ENCODE measurements at regions of chr4 and their contacts with region 1.

Region 1: GRCh38 chr4:4677556-4678522 is 136.0 kb upstream of the STX18 start:
- DNase-seq: no peak
- ATAC-seq: peak in 1 of 4 donors; percentile 39
- H3K4me3 ChIP-seq: peak overlapping the region in 3 of 12 donors; percentile 4 to 24 (median 16)
- H3K27ac ChIP-seq: no peak overlapping the region
- H3K4me1 ChIP-seq: peaks cover 0 to 11% (median 0%) of the 10 kb centered on the region in 12 donors
- H3K27me3 ChIP-seq: no peaks in the 10 kb centered on the region
- CTCF ChIP-seq: peak; percentile 30 to 57 (median 48)
- POLR2A ChIP-seq: no peak

Region 2: DNA sequence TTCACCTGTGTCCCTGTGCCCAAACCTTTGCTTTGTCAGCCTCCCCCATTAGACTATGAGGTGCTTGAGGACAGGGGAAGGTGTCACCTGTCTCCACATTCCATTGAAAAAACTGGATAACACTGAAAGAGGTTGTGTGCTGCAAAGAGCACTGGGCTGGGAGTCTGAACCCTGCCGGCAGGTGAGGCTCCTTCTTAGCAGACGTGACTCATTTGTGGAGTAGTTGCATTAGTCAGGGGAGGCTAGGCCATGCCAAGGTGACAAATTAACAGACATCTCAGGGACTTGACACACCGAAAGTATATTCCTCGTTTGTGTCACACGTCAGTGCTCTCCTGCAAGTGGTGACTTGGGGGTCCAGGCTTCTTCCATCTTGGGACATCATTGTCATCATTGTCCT is 40.1 kb before region 1 on chr4:
- intact Hi-C with region 1: no loop called
- DNase-seq: no peak
- ATAC-seq: no peak
- H3K4me3 ChIP-seq: no peak overlapping the region
- H3K27ac ChIP-seq: no peak overlapping the region
- H3K4me1 ChIP-seq: no peaks in the 10 kb centered on the region
- H3K27me3 ChIP-seq: no peaks in the 10 kb centered on the region
- CTCF ChIP-seq: no peak
- POLR2A ChIP-seq: no peak

Region 3: DNA sequence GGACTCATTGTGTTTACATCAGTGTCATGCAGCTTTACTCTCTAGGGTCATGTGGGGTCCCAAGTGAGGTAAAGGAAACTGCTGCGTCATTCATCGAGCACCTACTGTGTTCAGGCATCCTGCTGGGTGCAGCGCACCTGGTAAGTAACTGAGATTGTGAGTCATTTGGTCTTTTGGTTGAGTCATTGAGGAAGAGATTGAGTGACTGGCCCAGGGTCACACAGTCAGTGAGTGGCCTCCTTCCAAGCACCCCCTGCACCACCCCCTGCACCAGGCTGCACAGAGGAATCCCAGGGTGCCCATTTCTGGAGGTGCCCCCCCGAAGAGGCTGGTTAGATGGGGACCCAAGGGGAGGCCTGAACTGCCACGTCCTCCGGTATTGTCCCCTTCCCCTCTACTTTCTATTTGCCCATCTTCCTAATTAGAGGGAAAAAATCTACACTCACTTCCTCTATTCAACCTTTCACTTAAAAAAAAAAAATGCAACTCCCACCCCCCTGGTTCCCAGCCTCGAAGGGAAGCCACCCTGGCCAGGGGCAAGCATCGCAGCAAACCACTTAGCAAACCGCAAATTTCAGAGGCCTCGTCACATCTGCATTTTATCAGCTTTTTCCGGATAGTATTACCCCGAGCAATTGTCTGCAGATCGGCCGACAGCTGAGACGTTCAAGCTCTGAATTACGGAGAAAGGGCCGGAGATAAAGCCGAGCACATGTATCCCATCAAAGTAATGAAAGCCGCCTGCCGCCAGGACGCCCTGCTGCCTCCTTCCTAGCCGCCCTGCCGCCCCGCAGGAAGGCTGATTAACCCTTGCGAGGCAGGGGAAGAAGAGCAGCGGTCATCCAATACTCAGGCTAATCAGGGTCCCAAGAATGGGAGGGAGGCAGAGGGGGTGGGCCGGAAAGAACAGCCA is 85.3 kb after region 1 on chr4:
- intact Hi-C with region 1: no loop called
- DNase-seq: peak in 1 of 5 donors; percentile 19
- ATAC-seq: no peak
- H3K4me3 ChIP-seq: no peak overlapping the region
- H3K27ac ChIP-seq: no peak overlapping the region
- H3K4me1 ChIP-seq: no peaks in the 10 kb centered on the region
- H3K27me3 ChIP-seq: peaks cover 0 to 25% (median 0%) of the 10 kb centered on the region in 9 donors
- CTCF ChIP-seq: no peak
- POLR2A ChIP-seq: no peak

Region 4: GRCh38 chr4:4859390-4859842 is 181.6 kb after region 1 on chr4 and contains the start of gene MSX1:
- intact Hi-C with region 1: loop called in 3 of 10 experiments (anchors 10 kb)
- DNase-seq: peak; percentile 89 to 92 (median 90)
- ATAC-seq: peak; percentile 92 to 98 (median 96)
- H3K4me3 ChIP-seq: peak within 1 kb of the TSS; percentile 58 to 95 (median 76)
- H3K27ac ChIP-seq: peak within 1 kb of the TSS; percentile 48 to 92 (median 84)
- H3K4me1 ChIP-seq: peaks cover 0 to 69% (median 32%) of the 10 kb centered on the region in 12 donors
- H3K27me3 ChIP-seq: peaks cover 72 to 98% (median 91%) of the 10 kb centered on the region in 9 donors
- CTCF ChIP-seq: no peak
- POLR2A ChIP-seq: peak; percentile 78 to 94
- total RNA-seq, gene MSX1: 2.7 to 7.4 (median 4.2) TPM

Region 5: GRCh38 chr4:4869731-4870571 is 192.1 kb after region 1 on chr4:
- intact Hi-C with region 1: loop called in 2 of 10 experiments (anchors 10 kb)
- DNase-seq: peak in 1 of 5 donors; percentile 20
- ATAC-seq: no peak
- H3K4me3 ChIP-seq: no peak overlapping the region
- H3K27ac ChIP-seq: no peak overlapping the region
- H3K4me1 ChIP-seq: peaks cover 0 to 51% (median 20%) of the 10 kb centered on the region in 12 donors
- H3K27me3 ChIP-seq: peaks cover 84 to 100% (median 98%) of the 10 kb centered on the region in 9 donors
- CTCF ChIP-seq: no peak
- POLR2A ChIP-seq: no peak

Measured in heart left ventricle (tissue), 16 donors.